GM23248 (cell line): ENCODE measurements at regions of chr6 and their contacts with region 1.

Region 1: GRCh38 chr6:133916650-133917151 is 27.8 kb downstream of the TCF21 start:
- DNase-seq: peak; percentile 85
- H3K4me3 ChIP-seq: no peak overlapping the region
- H3K27ac ChIP-seq: no peak overlapping the region
- H3K4me1 ChIP-seq: peaks cover 9% of the 10 kb centered on the region; the same call in 1 of the 2 replicates
- H3K27me3 ChIP-seq: no peaks in the 10 kb centered on the region

Region 2: DNA sequence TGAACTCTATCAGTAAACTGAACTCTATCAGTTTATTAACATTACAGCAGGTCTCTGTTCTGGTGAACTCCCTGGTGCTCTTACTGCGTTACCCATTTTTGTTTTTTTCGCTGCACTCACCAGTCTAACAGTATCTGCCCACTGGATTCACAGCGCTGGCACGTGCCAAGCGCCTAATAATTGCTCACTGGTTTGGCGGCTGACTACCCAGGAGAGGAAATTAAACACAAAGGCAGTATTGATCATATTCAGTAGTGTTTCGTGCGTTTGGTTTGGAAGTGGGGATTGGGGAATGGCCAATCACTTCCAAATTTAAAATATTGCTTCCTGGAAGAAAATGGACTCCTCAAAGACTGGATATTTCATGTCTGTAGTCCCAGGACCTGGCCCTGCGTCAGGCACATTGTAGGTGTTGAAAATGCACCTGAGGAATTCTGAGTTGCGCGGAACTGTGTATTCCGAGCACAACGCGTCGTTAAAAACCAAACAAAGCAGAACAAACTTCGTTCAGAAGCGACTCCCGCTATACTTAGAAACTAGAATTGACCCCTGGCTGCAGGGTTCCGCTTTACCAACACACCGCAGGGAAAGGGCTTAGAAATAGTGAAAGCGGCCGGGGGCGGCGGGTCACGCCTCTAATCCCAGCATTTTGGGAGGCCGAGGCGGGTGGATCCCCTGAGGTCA is 1103.4 kb before region 1 on chr6:
- in situ Hi-C with region 1: loop called (anchors 25 kb)
- DNase-seq: peak; percentile 82
- H3K4me3 ChIP-seq: peak overlapping the region; percentile 80
- H3K27ac ChIP-seq: peak overlapping the region; percentile 77
- H3K4me1 ChIP-seq: peaks cover 29% of the 10 kb centered on the region
- H3K27me3 ChIP-seq: no peaks in the 10 kb centered on the region

Region 3: GRCh38 chr6:132962936-132963868 is 953.5 kb before region 1 on chr6:
- in situ Hi-C with region 1: loop called (anchors 25 kb)
- DNase-seq: peak; percentile 73
- H3K4me3 ChIP-seq: no peak overlapping the region
- H3K27ac ChIP-seq: no peak overlapping the region
- H3K4me1 ChIP-seq: peaks cover 10% of the 10 kb centered on the region; the same call in 1 of the 2 replicates
- H3K27me3 ChIP-seq: peaks cover 19% of the 10 kb centered on the region; the same call in 1 of the 2 replicates

Region 4: GRCh38 chr6:133184798-133185372 is 731.8 kb before region 1 on chr6:
- in situ Hi-C with region 1: loop called (anchors 25 kb)
- DNase-seq: peak; percentile 47
- H3K4me3 ChIP-seq: no peak overlapping the region
- H3K27ac ChIP-seq: no peak overlapping the region
- H3K4me1 ChIP-seq: no peaks in the 10 kb centered on the region
- H3K27me3 ChIP-seq: peaks cover 20% of the 10 kb centered on the region

Region 5: GRCh38 chr6:133568970-133569889 is 347.5 kb before region 1 on chr6:
- in situ Hi-C with region 1: loop called (anchors 5 kb)
- DNase-seq: peak; percentile 98
- H3K4me3 ChIP-seq: peak overlapping the region; percentile 72
- H3K27ac ChIP-seq: peak overlapping the region; percentile 87
- H3K4me1 ChIP-seq: peaks cover 25% of the 10 kb centered on the region
- H3K27me3 ChIP-seq: no peaks in the 10 kb centered on the region